Gastrocnemius medialis (tissue), 4 donors: ENCODE measurements at regions of chr2 and their contacts with region 1.

Region 1: GRCh38 chr2:228819701-228820100 is 451.4 kb downstream of the PID1 start:
- DNase-seq: no peak
- ATAC-seq: no peak
- H3K4me3 ChIP-seq: no peak overlapping the region
- H3K27ac ChIP-seq: no peak overlapping the region
- H3K4me1 ChIP-seq: no peaks in the 10 kb centered on the region
- H3K27me3 ChIP-seq: no peaks in the 10 kb centered on the region
- CTCF ChIP-seq: no peak
- POLR2A ChIP-seq: no peak

Region 2: GRCh38 chr2:228118940-228119339 is 700.8 kb before region 1 on chr2:
- in situ Hi-C with region 1: no loop called
- intact Hi-C with region 1: loop called (anchors 5 kb)
- DNase-seq: no peak
- ATAC-seq: no peak
- H3K4me3 ChIP-seq: no peak overlapping the region
- H3K27ac ChIP-seq: no peak overlapping the region
- H3K4me1 ChIP-seq: no peaks in the 10 kb centered on the region
- H3K27me3 ChIP-seq: no peaks in the 10 kb centered on the region
- CTCF ChIP-seq: no peak
- POLR2A ChIP-seq: no peak